HEK293 (cell line): ENCODE measurements at regions of chr17 and their contacts with region 1.

Region 1: DNA sequence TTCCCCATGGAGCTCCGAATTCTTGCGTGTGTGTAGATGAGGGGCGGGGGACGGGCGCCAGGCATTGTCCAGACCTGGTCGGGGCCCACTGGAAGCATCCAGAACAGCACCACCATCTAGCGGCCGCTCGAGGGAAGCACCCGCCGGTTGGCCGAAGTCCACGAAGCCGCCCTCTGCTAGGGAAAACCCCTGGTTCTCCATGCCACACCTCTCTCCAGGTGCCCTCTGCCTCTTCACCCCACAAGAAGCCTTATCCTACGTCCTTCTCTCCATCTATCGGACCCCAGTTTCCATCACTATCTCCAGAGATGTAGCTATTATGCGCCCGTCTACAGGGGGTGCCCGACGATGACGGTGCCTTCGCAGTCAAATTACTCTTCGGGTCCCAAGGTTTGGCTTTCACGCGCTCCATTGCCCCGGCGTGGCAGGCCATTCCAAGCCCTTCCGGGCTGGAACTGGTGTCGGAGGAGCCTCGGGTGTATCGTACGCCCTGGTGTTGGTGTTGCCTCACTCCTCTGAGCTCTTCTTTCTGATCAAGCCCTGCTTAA is 617 bp upstream of the SENP3 start:
- H3K4me3 ChIP-seq: peak overlapping the region; percentile 85
- H3K27ac ChIP-seq: peak overlapping the region; percentile 93
- H3K4me1 ChIP-seq: peaks cover 11% of the 10 kb centered on the region
- CTCF ChIP-seq: peak; percentile 90

Region 2: GRCh38 chr17:7323731-7324437 is 237.2 kb before region 1 on chr17:
- CTCF ChIA-PET with region 1: interaction called, 11 read pairs
- POLR2A ChIA-PET with region 1: interaction called, 12 read pairs
- H3K4me3 ChIP-seq: no peak overlapping the region
- H3K27ac ChIP-seq: no peak overlapping the region
- H3K4me1 ChIP-seq: peaks cover 6% of the 10 kb centered on the region
- CTCF ChIP-seq: peak; percentile 79

Region 3: DNA sequence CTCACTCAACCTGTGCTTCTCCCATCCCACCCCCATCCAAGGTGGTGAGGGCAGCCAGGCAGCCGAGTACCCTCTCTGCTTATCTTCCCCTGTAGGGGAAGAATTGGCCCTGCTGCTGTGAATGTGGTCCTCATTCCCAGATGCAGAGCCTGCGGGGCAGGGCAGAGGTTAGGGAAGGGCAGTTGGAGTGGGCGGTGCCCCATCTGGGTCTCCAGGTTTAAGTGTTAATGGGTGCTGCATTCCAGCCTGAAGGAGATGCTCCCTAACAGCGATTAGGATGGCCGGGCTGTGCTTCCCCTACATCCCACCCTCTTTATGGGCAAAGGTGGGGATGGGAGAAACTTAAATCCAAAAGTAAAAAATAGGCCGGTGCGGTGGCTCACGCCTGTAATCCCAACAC is 194.0 kb before region 1 on chr17:
- CTCF ChIA-PET with region 1: interaction called, 13 read pairs
- POLR2A ChIA-PET with region 1: interaction called, 3 read pairs
- H3K4me3 ChIP-seq: no peak overlapping the region
- H3K27ac ChIP-seq: no peak overlapping the region
- H3K4me1 ChIP-seq: no peaks in the 10 kb centered on the region
- CTCF ChIP-seq: no peak

Region 4: GRCh38 chr17:7495906-7496434 is 65.1 kb before region 1 on chr17:
- CTCF ChIA-PET with region 1: interaction called, 22 read pairs
- POLR2A ChIA-PET with region 1: interaction called, 3 read pairs
- H3K4me3 ChIP-seq: no peak overlapping the region
- H3K27ac ChIP-seq: no peak overlapping the region
- H3K4me1 ChIP-seq: peaks cover 3% of the 10 kb centered on the region; the same call in 1 of the 2 replicates
- CTCF ChIP-seq: no peak

Region 5: GRCh38 chr17:7530023-7530900 is 30.8 kb before region 1 on chr17:
- CTCF ChIA-PET with region 1: interaction called, 19 read pairs
- POLR2A ChIA-PET with region 1: no interaction called
- H3K4me3 ChIP-seq: no peak overlapping the region
- H3K27ac ChIP-seq: no peak overlapping the region
- H3K4me1 ChIP-seq: no peaks in the 10 kb centered on the region
- CTCF ChIP-seq: no peak

Region 6: GRCh38 chr17:7583253-7584109 is 22.4 kb after region 1 on chr17 and contains the start of gene MPDU1:
- CTCF ChIA-PET with region 1: interaction called, 8 read pairs
- POLR2A ChIA-PET with region 1: interaction called, 11 read pairs
- H3K4me3 ChIP-seq: peak within 1 kb of the TSS; percentile 86
- H3K27ac ChIP-seq: peak within 1 kb of the TSS; percentile 95
- H3K4me1 ChIP-seq: peaks cover 8% of the 10 kb centered on the region; the same call in 1 of the 2 replicates
- CTCF ChIP-seq: peak; percentile 52

Region 7: GRCh38 chr17:7944326-7944725 is 383.2 kb after region 1 on chr17:
- CTCF ChIA-PET with region 1: no interaction called
- POLR2A ChIA-PET with region 1: no interaction called
- H3K4me3 ChIP-seq: no peak overlapping the region
- H3K27ac ChIP-seq: no peak overlapping the region
- H3K4me1 ChIP-seq: no peaks in the 10 kb centered on the region
- CTCF ChIP-seq: no peak